ENCODE measurements at regions of chr3 and their contacts with region 1.

Region 1: GRCh38 chr3:32296256-32297204 is 58.0 kb downstream of the CMTM8 start:
- DNase-seq: peak; percentile 55
- H3K4me3 ChIP-seq: no peak overlapping the region
- H3K27ac ChIP-seq: no peak overlapping the region
- H3K4me1 ChIP-seq: peaks cover 12% of the 10 kb centered on the region
- H3K27me3 ChIP-seq: no peaks in the 10 kb centered on the region
- CTCF ChIP-seq: peak; percentile 92

Region 2: DNA sequence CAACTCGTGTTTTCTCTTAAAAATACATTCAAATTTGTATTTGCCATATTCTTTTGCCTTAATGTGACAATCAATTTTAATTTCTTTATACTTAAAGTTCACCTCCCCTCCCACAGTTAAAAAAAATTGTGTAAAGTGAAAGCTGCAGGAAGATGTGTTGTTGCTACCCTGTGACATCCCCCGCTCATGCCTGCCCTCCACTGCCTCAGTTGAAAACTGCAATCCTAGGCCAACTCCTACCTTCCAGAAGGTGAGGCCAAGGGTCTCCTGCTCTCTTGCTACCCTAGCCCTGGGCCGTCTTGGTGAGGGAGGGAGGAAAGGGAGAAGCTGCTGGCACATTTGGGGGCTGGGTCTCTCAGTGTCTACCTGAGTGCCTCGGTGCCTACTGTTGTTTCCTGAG is 38.1 kb after region 1 on chr3:
- intact Hi-C with region 1: loop called (anchors 5 kb)
- DNase-seq: no peak
- H3K4me3 ChIP-seq: no peak overlapping the region
- H3K27ac ChIP-seq: no peak overlapping the region
- H3K4me1 ChIP-seq: peaks cover 11% of the 10 kb centered on the region
- H3K27me3 ChIP-seq: no peaks in the 10 kb centered on the region
- CTCF ChIP-seq: peak; percentile 30

Region 3: DNA sequence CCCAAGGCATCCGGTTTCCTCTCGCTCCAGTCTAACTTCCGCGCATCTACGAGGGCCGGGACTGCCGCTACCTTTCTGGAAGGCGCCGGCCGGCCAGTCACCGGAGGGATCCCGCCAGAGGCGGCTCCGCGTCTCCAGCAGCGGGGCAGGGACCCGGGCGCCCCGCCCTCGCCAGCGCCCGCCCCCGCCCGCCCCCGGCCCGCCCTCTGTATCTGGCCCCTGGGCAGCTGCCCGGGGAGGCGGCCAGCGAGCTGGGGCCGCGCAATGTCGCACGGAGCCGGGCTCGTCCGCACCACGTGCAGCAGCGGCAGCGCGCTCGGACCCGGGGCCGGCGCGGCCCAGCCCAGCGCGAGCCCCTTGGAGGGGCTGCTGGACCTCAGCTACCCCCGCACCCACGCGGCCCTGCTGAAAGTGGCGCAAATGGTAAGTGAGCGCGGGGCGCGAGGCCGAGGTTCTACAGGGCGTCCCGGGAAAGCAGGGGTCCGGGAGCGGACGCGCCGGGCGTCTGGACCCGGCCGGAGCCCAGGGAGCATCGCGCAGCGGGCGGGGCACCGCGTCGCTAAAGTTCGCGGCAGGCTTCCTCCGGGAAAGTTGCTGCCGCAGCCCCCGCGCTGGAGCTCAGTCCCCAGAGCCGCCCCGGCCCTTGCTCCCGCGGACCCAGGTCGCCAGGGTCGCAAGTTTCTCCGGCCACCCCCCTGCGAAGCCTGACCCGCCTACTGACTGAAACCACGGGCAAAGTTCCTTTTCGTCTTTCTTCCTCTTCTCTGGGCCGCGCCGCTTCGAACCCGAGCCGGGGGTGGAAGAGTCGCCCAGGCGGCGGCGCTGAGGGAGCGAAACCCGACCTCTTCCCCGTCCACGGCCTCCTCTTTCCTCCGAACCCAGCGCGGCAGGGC is 95.4 kb after region 1 on chr3 and contains the start of gene CMTM7:
- intact Hi-C with region 1: loop called (anchors 10 kb)
- DNase-seq: peak; percentile 69
- H3K4me3 ChIP-seq: peak within 1 kb of the TSS; percentile 88
- H3K27ac ChIP-seq: peak within 1 kb of the TSS; percentile 90
- H3K4me1 ChIP-seq: peaks cover 20% of the 10 kb centered on the region
- H3K27me3 ChIP-seq: no peaks in the 10 kb centered on the region
- CTCF ChIP-seq: no peak
- total RNA-seq, gene CMTM7: 2.9 TPM